ENCODE measurements at regions of chr6 and their contacts with region 1.

Region 1: DNA sequence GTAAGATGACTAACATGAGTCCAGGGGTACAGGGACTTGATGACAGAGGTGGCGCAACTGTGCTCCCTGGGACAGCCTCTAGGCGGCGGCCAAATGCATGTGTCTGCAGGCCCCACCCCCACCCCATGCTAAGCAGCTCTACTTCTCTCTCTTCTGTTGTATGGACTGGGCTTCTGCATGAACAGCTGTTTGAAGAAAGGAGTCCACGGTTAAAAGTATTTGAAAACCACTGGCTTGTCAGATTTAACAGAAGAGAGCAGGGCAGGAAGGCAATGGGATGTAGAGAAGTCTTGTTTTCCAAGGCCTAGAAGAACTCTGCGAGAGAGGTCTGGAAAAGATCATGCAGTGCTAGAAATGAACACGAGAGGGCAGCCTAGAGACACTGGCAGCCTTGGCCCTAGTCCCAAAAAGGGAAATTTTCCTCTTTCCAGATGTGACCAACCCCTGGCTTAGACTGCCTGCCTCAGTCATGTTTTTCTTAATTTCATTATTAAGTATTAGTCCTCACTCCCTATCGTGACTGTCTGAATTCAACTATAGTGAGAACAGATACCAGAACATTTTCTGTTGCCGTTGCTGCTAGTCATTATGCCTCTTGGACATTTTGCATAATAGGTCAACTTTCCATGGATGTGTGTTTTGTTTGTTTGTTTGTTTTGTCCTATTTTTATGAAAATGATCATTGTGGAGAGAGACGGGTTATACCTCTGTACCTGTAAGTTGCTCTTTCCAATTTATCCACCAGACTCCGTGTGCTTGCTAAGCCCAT is 265.0 kb downstream of the ADGRG6 start:
- DNase-seq: no peak
- ATAC-seq: peak; percentile 82
- H3K4me3 ChIP-seq: no peak overlapping the region
- H3K27ac ChIP-seq: no peak overlapping the region
- H3K4me1 ChIP-seq: peaks cover 0 to 4% of the 10 kb centered on the region in 2 donors
- H3K27me3 ChIP-seq: no peaks in the 10 kb centered on the region

Region 2: GRCh38 chr6:142679907-142680700 is 113.3 kb after region 1 on chr6:
- intact Hi-C with region 1: loop called in 1 of 2 experiments (anchors 5 kb)
- DNase-seq: peak; percentile 81 to 83
- ATAC-seq: peak; percentile 55
- H3K4me3 ChIP-seq: no peak overlapping the region
- H3K27ac ChIP-seq: peak overlapping the region; percentile 57 to 59
- H3K4me1 ChIP-seq: peaks cover 0 to 4% of the 10 kb centered on the region in 2 donors
- H3K27me3 ChIP-seq: no peaks in the 10 kb centered on the region